Right ventricle myocardium superior (tissue), 1 donor: ENCODE measurements at regions of chr2 and their contacts with region 1.

Region 1: GRCh38 chr2:68487773-68488355 is 20.5 kb downstream of the APLF start:
- DNase-seq: no peak
- ATAC-seq: no peak

Region 2: DNA sequence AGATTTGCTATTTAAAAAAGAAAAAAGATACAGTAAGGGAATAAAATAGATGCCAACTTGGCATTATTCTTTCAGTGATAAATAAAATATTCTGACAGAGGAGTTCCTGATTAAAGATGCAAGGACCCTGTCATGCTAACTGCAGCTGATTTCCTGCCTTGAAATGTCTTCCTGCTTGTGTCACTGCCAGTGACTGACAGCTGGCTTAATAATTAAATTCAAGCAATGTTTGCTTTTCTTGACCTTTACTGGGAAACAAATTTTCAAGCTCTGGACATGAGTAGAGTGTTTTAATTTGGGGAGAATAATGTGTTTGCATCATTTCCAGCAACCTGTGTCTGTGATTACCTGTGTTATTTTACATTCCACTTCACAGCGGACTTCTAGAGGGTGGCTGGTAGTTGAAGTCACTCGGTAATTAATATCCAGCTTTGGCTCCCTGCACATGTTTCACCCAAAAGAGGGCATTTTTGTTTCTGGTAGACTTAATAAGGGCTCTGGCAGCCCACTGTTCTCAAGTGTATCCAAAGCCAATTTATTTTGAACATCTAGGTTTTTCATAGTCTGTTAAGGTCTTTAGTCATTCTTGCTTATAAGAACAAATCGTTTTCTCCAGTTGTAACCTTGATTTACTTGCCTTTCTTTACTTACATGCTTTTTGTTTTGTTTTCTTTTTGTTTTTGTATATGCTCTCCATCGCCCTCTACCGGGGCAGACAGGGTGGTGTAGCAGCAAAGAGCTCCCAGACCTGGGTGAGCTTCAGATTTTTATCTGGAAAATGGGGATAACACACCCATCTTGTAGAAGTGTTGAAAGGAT is 107.0 kb after region 1 on chr2:
- intact Hi-C with region 1: no loop called
- DNase-seq: peak; percentile 46
- ATAC-seq: peak; percentile 45

Region 3: GRCh38 chr2:68715353-68716041 is 227.6 kb after region 1 on chr2:
- intact Hi-C with region 1: loop called (anchors 10 kb)
- DNase-seq: peak; percentile 46
- ATAC-seq: peak; percentile 66